Thyroid gland (tissue), 4 donors: ENCODE measurements at regions of chr5 and their contacts with region 1.

Region 1: DNA sequence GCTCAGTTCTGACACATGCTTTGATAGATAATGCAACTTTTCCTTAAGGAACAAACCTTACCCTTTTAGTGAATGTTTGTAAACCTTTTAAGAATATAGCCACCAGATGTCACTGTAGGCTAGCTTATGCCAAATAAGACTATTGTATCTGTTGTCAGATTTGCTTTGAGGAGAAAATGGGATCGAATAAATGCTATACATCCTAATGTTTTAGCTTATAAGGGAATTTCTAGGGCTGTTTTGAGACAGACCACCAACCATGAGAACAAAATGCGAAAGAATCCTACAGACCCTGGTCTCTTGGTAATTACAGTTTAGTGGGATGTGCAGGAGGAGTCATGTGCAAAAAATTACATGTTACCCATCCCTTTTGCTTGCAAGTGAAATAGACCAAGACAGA is 127.6 kb upstream of the NMUR2 start:
- DNase-seq: no peak
- H3K4me3 ChIP-seq: no peak overlapping the region
- H3K27ac ChIP-seq: no peak overlapping the region
- H3K4me1 ChIP-seq: no peaks in the 10 kb centered on the region
- H3K27me3 ChIP-seq: no peaks in the 10 kb centered on the region
- CTCF ChIP-seq: peak in 5 of 6 experiments; percentile 35 to 77 (median 52)
- POLR2A ChIP-seq: no peak

Region 2: GRCh38 chr5:152405145-152405544 is 127.6 kb before region 1 on chr5 and contains the start of gene NMUR2:
- intact Hi-C with region 1: no loop called
- DNase-seq: peak; percentile 74 to 78
- H3K4me3 ChIP-seq: no peak within 1 kb of the TSS
- H3K27ac ChIP-seq: no peak within 1 kb of the TSS
- H3K4me1 ChIP-seq: peaks cover 0 to 9% of the 10 kb centered on the region in 2 donors
- H3K27me3 ChIP-seq: no peaks in the 10 kb centered on the region
- CTCF ChIP-seq: no peak
- POLR2A ChIP-seq: no peak
- total RNA-seq, gene NMUR2: 0.42 to 1.9 (median 0.59) TPM in 3 of 4 donors, not detected in the other

Region 3: GRCh38 chr5:152462021-152462721 is 70.5 kb before region 1 on chr5:
- intact Hi-C with region 1: no loop called
- DNase-seq: no peak
- H3K4me3 ChIP-seq: no peak overlapping the region
- H3K27ac ChIP-seq: no peak overlapping the region
- H3K4me1 ChIP-seq: no peaks in the 10 kb centered on the region
- H3K27me3 ChIP-seq: no peaks in the 10 kb centered on the region
- CTCF ChIP-seq: no peak
- POLR2A ChIP-seq: no peak

Region 4: DNA sequence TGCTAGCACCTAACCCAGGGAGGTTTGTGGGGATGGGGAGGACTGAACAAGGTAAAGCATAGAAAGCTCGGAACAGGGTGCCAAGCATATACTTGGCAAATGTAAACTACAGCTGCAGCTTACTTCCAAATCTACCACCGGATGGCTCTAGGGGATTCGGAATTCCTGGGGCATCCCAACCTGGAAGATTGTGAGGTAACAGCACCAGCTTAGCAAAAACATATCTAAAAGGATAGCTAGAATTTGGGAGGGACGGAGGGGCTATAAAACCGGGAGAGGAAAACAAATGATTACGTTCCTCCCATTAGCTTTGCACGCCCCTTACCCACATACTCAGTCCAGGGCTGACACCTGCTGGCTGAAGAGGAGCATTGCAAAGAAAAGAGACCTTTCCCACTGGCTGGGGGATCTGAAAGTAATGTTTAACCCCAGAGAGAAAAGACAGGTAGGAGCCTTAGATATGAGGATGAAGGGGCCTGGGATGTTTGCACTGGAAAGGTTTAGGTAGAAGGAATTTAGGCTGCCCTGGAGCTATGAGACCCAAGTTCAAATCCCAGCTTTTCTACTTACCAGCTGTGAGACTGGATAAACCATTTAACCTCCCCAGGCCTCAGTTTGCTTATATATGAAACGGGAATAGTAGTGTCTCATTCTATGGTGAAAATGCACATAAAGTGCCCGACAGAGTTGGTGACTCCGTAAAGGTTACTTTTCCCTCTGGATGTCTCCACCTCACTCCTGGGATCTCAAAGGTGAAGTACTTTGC is 1432.3 kb after region 1 on chr5:
- intact Hi-C with region 1: loop called (anchors 5 kb)
- DNase-seq: peak; percentile 29 to 55
- H3K4me3 ChIP-seq: no peak overlapping the region
- H3K27ac ChIP-seq: no peak overlapping the region
- H3K4me1 ChIP-seq: peaks cover 6 to 10% of the 10 kb centered on the region in 2 donors
- H3K27me3 ChIP-seq: no peaks in the 10 kb centered on the region
- CTCF ChIP-seq: peak in 5 of 6 experiments; percentile 67 to 92 (median 80)
- POLR2A ChIP-seq: no peak